ENCODE measurements at regions of chr10 and their contacts with region 1.

Region 1: DNA sequence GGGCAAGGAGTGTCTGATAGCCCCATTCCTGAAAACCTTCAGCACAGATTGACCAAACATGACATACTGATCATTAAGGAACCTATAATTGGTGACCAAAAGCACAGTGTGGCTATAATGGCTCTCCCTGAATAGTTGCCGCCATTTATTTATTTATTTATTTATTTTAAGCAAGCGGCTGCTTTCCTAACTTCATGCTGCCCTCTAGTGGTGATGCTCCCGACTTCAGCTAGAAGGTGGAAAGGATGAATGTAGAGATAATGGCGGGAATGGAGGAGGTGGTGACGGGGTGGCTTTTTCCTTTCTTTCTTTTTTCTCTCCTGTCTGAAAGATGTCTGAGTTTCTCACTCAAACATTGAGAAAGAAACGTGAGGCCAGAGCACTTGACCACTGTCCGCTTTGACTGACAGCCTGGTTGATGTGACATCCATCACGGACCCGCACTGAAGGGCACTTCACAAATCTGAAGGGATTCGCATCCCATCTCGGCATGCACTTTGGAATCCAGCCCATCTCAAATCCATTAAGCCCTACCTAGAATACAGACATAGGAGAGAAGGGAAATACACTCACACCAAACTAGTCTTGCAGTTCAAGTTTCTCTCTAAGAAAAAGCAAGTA is 1090.1 kb downstream of the KCNMA1 start:
- DNase-seq: peak; percentile 77
- ATAC-seq: peak; percentile 64
- H3K4me3 ChIP-seq: no peak overlapping the region
- H3K27ac ChIP-seq: no peak overlapping the region
- H3K4me1 ChIP-seq: peaks cover 4% of the 10 kb centered on the region
- H3K27me3 ChIP-seq: peaks cover 5% of the 10 kb centered on the region
- CTCF ChIP-seq: peak; percentile 91
- POLR2A ChIP-seq: no peak
- RAD21 ChIP-seq: peak; percentile 93

Region 2: DNA sequence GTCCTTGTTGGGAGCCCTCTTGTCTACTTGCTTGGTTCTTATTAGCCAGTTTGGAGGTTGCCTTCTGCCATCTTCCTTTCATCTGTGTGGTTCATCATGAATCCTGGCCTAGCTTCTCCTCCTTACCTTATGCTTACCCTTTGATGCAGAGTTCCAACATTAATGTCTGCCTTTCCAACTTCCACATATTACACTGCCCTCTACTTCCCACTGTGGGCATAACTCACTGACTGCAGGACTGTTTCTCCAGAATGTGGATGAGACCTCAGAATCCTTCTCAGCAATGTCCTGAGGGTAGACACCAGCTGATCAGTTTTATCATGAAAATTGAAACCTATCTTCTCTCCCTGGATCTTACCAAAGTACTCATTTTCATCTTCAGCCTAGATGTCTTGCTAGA is 625.0 kb before region 1 on chr10:
- CTCF ChIA-PET with region 1: no interaction called
- POLR2A ChIA-PET with region 1: no interaction called
- dilution Hi-C with region 1: no loop called
- in situ Hi-C with region 1: no loop called
- intact Hi-C with region 1: loop called (anchors 10 kb)
- DNase-seq: peak; percentile 0
- ATAC-seq: no peak
- H3K4me3 ChIP-seq: no peak overlapping the region
- H3K27ac ChIP-seq: no peak overlapping the region
- H3K4me1 ChIP-seq: no peaks in the 10 kb centered on the region
- H3K27me3 ChIP-seq: peaks cover 9% of the 10 kb centered on the region
- CTCF ChIP-seq: no peak
- POLR2A ChIP-seq: no peak
- RAD21 ChIP-seq: no peak

Region 3: GRCh38 chr10:76106611-76107010 is 440.9 kb before region 1 on chr10:
- CTCF ChIA-PET with region 1: no interaction called
- POLR2A ChIA-PET with region 1: no interaction called
- dilution Hi-C with region 1: no loop called
- in situ Hi-C with region 1: no loop called
- intact Hi-C with region 1: loop called (anchors 1 kb)
- DNase-seq: no peak
- ATAC-seq: no peak
- H3K4me3 ChIP-seq: no peak overlapping the region
- H3K27ac ChIP-seq: no peak overlapping the region
- H3K4me1 ChIP-seq: peaks cover 7% of the 10 kb centered on the region; the same call in 1 of the 2 replicates
- H3K27me3 ChIP-seq: no peaks in the 10 kb centered on the region; the same call in 1 of the 2 replicates
- CTCF ChIP-seq: no peak
- POLR2A ChIP-seq: no peak
- RAD21 ChIP-seq: no peak

Region 4: GRCh38 chr10:76303682-76304316 is 243.7 kb before region 1 on chr10:
- CTCF ChIA-PET with region 1: no interaction called
- POLR2A ChIA-PET with region 1: interaction called, 4 read pairs
- dilution Hi-C with region 1: no loop called
- in situ Hi-C with region 1: loop called (anchors 5 kb)
- intact Hi-C with region 1: loop called (anchors 1 kb)
- DNase-seq: peak; percentile 71
- ATAC-seq: peak; percentile 86
- H3K4me3 ChIP-seq: no peak overlapping the region
- H3K27ac ChIP-seq: no peak overlapping the region
- H3K4me1 ChIP-seq: peaks cover 9% of the 10 kb centered on the region
- H3K27me3 ChIP-seq: 0 out of 2 replicates have a peak, but pooled peaks cover 2% of the 10 kb centered on the region
- CTCF ChIP-seq: peak; percentile 55
- POLR2A ChIP-seq: no peak
- RAD21 ChIP-seq: peak; percentile 67

Region 5: GRCh38 chr10:77004917-77005564 is 457.6 kb after region 1 on chr10:
- CTCF ChIA-PET with region 1: no interaction called
- POLR2A ChIA-PET with region 1: no interaction called
- dilution Hi-C with region 1: no loop called
- in situ Hi-C with region 1: no loop called
- intact Hi-C with region 1: loop called (anchors 2 kb)
- DNase-seq: peak; percentile 58
- ATAC-seq: peak; percentile 92
- H3K4me3 ChIP-seq: no peak overlapping the region
- H3K27ac ChIP-seq: no peak overlapping the region
- H3K4me1 ChIP-seq: no peaks in the 10 kb centered on the region
- H3K27me3 ChIP-seq: no peaks in the 10 kb centered on the region
- CTCF ChIP-seq: peak; percentile 74
- POLR2A ChIP-seq: no peak
- RAD21 ChIP-seq: peak; percentile 72

Measured in IMR-90 (cell line).